Naive thymus-derived CD8-positive, alpha-beta T cell (primary cell): ENCODE measurements at regions of chr19 and their contacts with region 1.

Region 1: DNA sequence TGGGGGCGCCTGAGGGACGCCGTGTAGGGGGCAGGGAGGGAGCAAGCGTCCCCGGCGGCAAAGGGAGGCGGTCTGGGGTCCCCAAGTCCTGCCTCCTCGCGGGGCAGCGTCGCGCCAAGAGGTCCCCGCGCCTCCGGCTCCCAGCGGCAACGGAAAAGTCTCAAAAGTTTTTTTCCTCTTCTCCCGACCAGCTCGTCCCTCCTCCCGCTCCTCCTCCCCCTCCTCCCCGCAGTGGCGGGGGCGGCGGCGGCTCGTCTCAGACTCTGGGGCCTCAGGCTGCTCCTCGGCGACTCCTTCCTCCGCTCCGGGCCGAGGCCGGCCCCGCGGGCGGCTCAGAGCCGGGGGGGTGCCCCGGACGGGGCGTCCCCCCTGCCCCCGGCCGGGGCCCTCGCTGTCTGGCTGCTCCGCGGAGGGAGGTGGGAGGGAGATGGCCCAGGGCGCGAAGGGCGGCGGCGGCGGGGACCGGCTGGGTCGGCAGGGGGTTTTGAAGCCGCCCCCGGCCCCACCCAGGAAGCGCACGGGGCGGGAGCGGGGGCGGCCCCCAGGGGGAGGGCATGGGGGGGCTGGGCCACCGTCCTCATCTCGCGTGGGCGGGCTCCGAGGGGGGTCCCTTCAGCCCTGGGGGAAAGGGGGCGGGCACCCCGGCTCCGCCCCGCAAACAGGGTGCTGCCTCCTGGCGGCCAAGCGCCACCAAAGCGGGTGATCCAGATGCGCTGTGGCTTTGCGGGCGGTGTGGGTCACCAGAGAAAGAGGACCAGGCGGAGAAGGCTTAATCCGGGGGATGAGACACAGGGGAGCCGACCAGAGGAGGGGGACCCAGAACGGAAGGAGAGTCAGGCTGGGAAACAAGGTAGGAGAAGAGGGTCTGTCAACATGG is at the start of gene TGFB1:
- DNase-seq: peak; percentile 93 to 97 (median 95)
- ATAC-seq: peak; percentile 55 to 57
- H3K4me3 Mint-ChIP-seq: peak within 1 kb of the TSS; percentile 92 to 100 (median 99)
- H3K27ac Mint-ChIP-seq: peak within 1 kb of the TSS; percentile 94 to 99 (median 98)
- H3K4me1 Mint-ChIP-seq: peaks cover 45 to 83% (median 69%) of the 10 kb centered on the region in 4 donors
- H3K27me3 Mint-ChIP-seq: no peaks in the 10 kb centered on the region
- polyA plus RNA-seq, gene TGFB1: 30.5 to 45.4 (median 34.5) TPM

Region 2: DNA sequence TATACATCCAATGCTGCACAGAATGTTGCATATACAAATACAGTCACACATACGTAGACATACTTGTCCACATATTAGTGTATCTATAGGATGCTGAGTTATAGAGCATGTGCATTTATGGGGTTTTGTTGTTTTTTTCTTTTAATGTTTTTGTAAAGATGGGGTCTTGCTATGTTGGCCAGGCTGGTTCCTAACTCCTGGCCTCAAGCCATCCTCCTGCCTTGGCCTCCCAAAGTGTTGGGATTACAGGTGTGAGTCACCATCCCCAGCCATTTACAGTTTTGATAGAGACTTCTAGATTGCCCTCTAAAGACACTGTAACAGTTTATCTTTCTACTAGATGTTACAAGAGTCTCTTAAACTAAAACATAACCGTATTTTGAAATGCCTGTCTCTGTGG is 75.2 kb before region 1 on chr19:
- POLR2A ChIA-PET with region 1: no interaction called
- DNase-seq: no peak
- ATAC-seq: no peak
- H3K4me3 Mint-ChIP-seq: no peak overlapping the region
- H3K27ac Mint-ChIP-seq: peak overlapping the region in 4 of 10 donors; percentile 37 to 75 (median 68)
- H3K4me1 Mint-ChIP-seq: peaks cover 0 to 14% (median 9%) of the 10 kb centered on the region in 4 donors
- H3K27me3 Mint-ChIP-seq: no peaks in the 10 kb centered on the region

Region 3: DNA sequence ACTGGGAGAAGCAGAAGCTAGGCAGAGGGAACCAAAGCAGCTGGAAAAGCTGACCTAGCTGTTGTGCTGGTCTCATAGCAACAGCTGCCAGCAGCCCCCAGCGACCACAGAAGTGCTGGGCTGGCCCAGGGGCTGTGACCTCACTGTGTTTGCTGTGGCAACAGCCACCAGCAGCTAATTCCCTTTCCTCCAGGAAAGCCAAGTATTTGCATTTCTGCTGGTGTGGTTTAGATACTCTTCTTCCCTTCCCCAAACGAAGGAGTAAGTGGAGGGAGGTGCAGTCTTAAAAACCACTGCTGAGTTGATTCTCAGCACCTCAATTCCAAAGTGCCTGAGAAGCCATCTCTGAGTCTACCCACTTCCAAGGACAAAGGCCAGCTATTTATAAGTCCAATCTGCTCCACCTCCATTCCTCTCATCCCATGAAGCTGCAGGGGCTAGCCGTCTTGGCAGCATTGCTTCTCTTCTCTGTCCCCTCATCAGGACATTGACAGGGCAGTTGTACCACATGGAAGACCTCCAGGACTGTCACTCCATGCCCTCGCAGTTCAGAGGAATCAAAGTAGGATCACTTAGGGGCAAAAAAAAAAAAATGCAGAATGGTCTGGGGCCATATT is 55.2 kb before region 1 on chr19:
- POLR2A ChIA-PET with region 1: interaction called, 10 read pairs
- DNase-seq: peak in 6 of 10 donors; percentile 40 to 70 (median 52)
- ATAC-seq: peak; percentile 34 to 42
- H3K4me3 Mint-ChIP-seq: peak overlapping the region in 9 of 10 donors; percentile 5 to 64 (median 52)
- H3K27ac Mint-ChIP-seq: peak overlapping the region; percentile 82 to 99 (median 92)
- H3K4me1 Mint-ChIP-seq: peaks cover 50 to 86% (median 78%) of the 10 kb centered on the region in 4 donors
- H3K27me3 Mint-ChIP-seq: no peaks in the 10 kb centered on the region

Region 4: DNA sequence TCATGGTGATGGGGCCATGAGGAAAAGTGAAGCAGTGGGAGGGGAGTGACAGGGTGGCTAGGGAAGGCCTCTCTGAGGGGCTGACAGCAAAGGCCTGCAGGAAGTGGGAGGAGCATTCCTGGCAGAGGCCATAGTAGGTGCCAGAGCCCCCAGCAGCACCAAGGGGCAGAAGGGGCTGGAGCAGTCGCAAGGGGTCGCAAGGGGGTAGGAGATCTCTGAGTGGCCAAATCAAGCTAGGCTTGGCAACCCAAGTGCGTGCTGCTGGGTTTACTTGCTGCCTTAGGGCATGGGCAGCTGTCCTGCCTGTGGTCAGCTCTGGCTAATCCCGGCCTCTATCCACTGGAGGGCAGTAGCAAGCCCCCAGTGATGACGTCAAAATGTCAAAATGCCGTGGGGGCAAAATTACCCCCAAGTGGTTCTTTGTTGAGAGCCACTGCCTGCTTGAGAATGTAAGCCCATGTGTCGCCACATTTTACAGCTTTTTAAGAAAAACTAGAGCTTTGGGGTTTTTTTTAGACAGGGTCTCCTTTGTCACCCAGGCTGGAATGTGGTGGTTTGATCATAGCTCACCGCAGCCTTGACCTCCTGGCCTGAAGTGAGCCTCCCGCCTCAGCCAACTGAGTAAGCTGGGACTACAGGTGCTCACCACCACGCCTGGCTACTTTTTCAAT is 32.0 kb before region 1 on chr19:
- POLR2A ChIA-PET with region 1: interaction called, 71 read pairs
- DNase-seq: no peak
- ATAC-seq: no peak
- H3K4me3 Mint-ChIP-seq: no peak overlapping the region
- H3K27ac Mint-ChIP-seq: peak overlapping the region; percentile 63 to 91 (median 84)
- H3K4me1 Mint-ChIP-seq: peaks cover 34 to 62% (median 50%) of the 10 kb centered on the region in 4 donors
- H3K27me3 Mint-ChIP-seq: peaks cover 0 to 2% (median 0%) of the 10 kb centered on the region in 5 donors

Region 5: DNA sequence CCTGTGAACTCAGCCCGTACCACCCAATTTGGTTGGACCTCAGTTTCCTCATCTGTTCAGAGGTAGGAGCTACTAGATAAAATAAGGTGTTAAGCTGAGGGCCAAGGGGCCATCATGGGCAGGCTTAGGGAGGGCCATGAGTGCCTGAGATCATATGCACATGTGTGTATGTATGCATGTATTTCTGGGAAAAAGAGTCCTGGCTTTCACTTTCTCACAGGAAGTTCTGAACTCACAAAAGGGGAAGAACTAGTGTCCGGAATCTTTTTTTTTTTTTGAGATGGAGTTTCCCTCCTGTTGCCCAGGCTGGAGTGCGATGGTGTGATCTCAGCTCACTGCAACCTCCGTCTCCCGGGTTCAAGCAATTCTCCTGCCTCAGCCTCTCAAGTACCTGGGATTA is 18.9 kb before region 1 on chr19:
- POLR2A ChIA-PET with region 1: interaction called, 71 read pairs
- DNase-seq: no peak
- ATAC-seq: no peak
- H3K4me3 Mint-ChIP-seq: peak overlapping the region in 1 of 10 donors; percentile 9
- H3K27ac Mint-ChIP-seq: peak overlapping the region in 5 of 10 donors; percentile 11 to 71 (median 62)
- H3K4me1 Mint-ChIP-seq: peaks cover 15 to 65% (median 49%) of the 10 kb centered on the region in 4 donors
- H3K27me3 Mint-ChIP-seq: no peaks in the 10 kb centered on the region

Region 6: GRCh38 chr19:41363753-41364523 is 10.2 kb after region 1 on chr19 and contains the start of gene B9D2:
- POLR2A ChIA-PET with region 1: interaction called, 95 read pairs
- DNase-seq: peak; percentile 91 to 100 (median 98)
- ATAC-seq: peak; percentile 93 to 94
- H3K4me3 Mint-ChIP-seq: peak within 1 kb of the TSS; percentile 89 to 97 (median 94)
- H3K27ac Mint-ChIP-seq: peak within 1 kb of the TSS; percentile 99 to 100 (median 100)
- H3K4me1 Mint-ChIP-seq: peaks cover 12 to 57% (median 40%) of the 10 kb centered on the region in 4 donors
- H3K27me3 Mint-ChIP-seq: no peaks in the 10 kb centered on the region
- polyA plus RNA-seq, gene B9D2: 12.6 to 20.9 (median 19.8) TPM

Region 7: GRCh38 chr19:41386442-41386841 is 32.7 kb after region 1 on chr19:
- POLR2A ChIA-PET with region 1: no interaction called
- DNase-seq: no peak
- ATAC-seq: no peak
- H3K4me3 Mint-ChIP-seq: no peak overlapping the region
- H3K27ac Mint-ChIP-seq: peak overlapping the region in 2 of 10 donors; percentile 44 to 47
- H3K4me1 Mint-ChIP-seq: peaks cover 0 to 4% (median under 1%) of the 10 kb centered on the region in 4 donors
- H3K27me3 Mint-ChIP-seq: no peaks in the 10 kb centered on the region

Region 8: DNA sequence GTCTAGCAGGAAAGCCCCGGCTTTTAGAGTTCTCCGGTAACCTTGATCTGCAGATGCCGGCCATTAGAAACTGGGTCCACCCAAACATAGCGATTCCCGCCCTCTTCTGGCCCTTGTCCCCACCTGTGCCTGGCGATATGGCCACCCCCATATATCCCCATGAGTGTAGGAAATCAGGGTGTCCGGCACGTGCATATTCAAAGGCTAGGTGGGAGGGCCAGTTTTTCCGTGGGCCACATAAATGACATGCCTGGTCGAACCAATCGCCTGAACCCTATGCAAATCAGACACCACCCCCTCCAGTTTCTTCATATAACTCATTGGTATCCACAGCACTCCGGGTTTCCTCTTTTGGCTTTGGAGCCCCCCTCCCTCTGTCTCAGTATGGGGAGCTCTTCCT is 126.6 kb after region 1 on chr19:
- POLR2A ChIA-PET with region 1: no interaction called
- DNase-seq: no peak
- ATAC-seq: no peak
- H3K4me3 Mint-ChIP-seq: no peak overlapping the region
- H3K27ac Mint-ChIP-seq: no peak overlapping the region
- H3K4me1 Mint-ChIP-seq: peaks cover 0 to 8% (median under 1%) of the 10 kb centered on the region in 4 donors
- H3K27me3 Mint-ChIP-seq: peaks cover 12 to 73% (median 36%) of the 10 kb centered on the region in 5 donors